ACHN (cell line): ENCODE measurements at regions of chr1 and their contacts with region 1.

Region 1: GRCh38 chr1:65687428-65688214 is 105.1 kb upstream of the PDE4B start:
- DNase-seq: peak; percentile 57

Region 2: GRCh38 chr1:65067491-65068201 is 620.0 kb before region 1 on chr1:
- in situ Hi-C with region 1: loop called (anchors 10 kb)
- DNase-seq: peak; percentile 66